MCF 10A (cell line): ENCODE measurements at regions of chr10 and their contacts with region 1.

Region 1: DNA sequence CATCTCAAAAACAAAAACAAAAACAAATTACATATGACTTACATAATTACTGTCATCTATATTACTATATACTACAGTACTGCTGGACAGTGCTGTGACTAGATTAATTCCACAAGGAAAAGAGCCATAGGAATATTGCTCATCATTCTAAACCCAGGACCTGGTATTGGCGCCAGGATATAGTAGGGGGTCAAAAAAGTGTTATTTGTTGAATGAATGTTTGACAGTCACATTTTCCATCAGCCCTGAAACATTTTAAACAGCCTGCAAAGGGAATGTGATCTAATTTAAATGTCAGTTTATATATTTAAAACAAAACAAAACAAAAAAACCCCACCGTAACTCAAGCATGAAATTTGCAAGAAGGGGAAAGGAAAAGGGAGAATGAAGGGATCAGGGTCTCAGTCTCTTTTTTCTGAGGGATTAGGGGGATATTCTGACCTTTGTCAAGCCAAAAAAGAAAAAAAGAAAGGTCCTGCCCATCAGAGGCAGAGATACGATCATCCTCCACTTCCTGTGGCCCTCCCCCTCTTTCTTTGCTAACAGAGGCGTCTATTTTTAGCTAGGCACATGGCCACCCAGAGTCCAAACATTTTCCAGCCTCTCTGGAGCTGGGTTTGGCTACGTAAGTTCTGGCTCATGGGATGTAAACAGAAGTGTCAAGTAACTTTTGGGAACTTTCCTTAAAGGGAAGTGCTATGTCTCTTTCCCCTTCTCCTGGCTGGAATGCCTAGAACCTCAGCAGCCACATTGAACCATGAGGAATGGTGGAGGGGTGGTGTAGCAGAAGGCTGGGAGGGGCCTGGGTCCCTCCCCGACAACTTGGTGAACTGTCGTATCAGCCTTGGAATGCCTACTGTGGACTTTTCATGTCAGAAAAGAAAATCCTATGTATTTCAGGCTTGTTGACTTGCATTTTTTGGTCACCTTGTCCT is 44.6 kb upstream of the DLG5 start:
- DNase-seq: peak; percentile 89
- H3K4me3 Mint-ChIP-seq: no peak overlapping the region
- H3K27ac Mint-ChIP-seq: peak overlapping the region; percentile 49
- H3K4me1 Mint-ChIP-seq: peaks cover 14% of the 10 kb centered on the region
- H3K27me3 Mint-ChIP-seq: no peaks in the 10 kb centered on the region
- CTCF ChIP-seq: no peak

Region 2: GRCh38 chr10:77898647-77899477 is 72.3 kb before region 1 on chr10:
- CTCF ChIA-PET with region 1: interaction called, 3 read pairs
- POLR2A ChIA-PET with region 1: interaction called, 11 read pairs
- intact Hi-C with region 1: no loop called
- DNase-seq: peak; percentile 97
- H3K4me3 Mint-ChIP-seq: peak overlapping the region; percentile 75
- H3K27ac Mint-ChIP-seq: peak overlapping the region; percentile 87
- H3K4me1 Mint-ChIP-seq: peaks cover 55% of the 10 kb centered on the region
- H3K27me3 Mint-ChIP-seq: no peaks in the 10 kb centered on the region
- CTCF ChIP-seq: no peak

Region 3: DNA sequence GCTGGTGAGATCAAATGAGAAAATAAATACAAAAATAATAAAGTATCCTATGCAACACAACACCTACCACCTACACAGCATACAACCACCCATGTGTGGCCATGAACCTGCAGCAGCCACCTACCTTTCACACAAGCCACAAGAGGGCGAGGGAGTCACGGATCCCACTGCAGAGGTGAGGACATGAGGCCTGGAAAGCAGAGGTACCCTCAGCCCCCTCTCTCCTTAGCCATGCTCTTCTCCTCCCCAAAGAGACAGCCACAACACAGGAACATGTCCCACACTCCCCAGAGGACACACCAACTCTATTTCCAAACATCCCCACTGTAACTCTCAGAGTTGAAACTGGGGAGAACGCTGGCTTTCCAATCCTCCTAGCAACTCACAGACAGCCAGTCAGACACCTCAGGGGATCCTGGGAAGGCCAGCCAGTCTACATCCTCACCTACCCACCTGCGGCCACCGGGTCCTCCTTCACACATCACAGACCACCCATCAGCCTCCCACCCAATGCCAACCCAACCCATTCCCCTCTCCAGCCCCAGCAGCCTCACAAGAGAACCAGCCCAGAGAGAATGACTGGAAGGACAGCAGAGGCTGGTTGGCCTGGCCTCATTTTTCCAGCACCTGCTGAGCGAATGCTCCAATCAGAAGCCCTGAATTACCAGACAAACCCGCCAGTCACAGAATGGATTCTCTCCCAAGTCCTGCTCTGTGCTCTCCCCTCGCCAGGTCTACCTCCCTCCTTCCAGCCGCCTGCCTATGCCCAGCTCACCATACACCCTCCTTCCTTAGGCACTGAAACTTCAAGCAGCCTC is 63.0 kb before region 1 on chr10:
- CTCF ChIA-PET with region 1: interaction called, 10 read pairs
- POLR2A ChIA-PET with region 1: no interaction called
- intact Hi-C with region 1: loop called (anchors 1 kb)
- DNase-seq: peak; percentile 68
- H3K4me3 Mint-ChIP-seq: no peak overlapping the region
- H3K27ac Mint-ChIP-seq: peak overlapping the region; percentile 76
- H3K4me1 Mint-ChIP-seq: peaks cover 58% of the 10 kb centered on the region
- H3K27me3 Mint-ChIP-seq: no peaks in the 10 kb centered on the region
- CTCF ChIP-seq: peak; percentile 37

Region 4: DNA sequence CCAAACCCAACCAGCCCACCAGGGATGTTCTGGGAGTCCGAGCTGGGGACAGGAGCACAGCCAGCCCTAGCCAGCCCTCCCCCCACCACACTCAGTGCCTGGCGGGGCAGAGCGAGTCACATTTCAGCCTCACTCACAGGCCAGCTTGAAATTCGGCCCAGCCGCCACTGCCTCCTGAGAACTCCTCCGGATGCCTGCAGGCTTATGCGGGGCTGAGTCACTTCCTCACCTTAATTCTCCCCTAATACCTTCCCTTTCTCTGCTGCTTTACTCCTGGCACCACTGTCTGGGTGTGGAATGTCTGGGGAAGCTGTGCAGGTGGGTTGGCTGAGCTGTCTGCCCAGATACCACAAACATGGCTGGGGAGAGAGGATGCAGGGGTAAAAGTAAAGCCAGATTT is 22.0 kb before region 1 on chr10:
- CTCF ChIA-PET with region 1: interaction called, 3 read pairs
- POLR2A ChIA-PET with region 1: interaction called, 15 read pairs
- intact Hi-C with region 1: loop called (anchors 2 kb)
- DNase-seq: peak; percentile 96
- H3K4me3 Mint-ChIP-seq: no peak overlapping the region
- H3K27ac Mint-ChIP-seq: peak overlapping the region; percentile 11
- H3K4me1 Mint-ChIP-seq: peaks cover 34% of the 10 kb centered on the region
- H3K27me3 Mint-ChIP-seq: no peaks in the 10 kb centered on the region
- CTCF ChIP-seq: no peak